Dorsolateral prefrontal cortex (tissue), 120 donors: ENCODE measurements at regions of chr16 and their contacts with region 1.

Region 1: GRCh38 chr16:25340973-25341372 is 83.3 kb upstream of the ZKSCAN2 start:
- DNase-seq: no peak
- H3K4me3 ChIP-seq: no peak overlapping the region
- H3K27ac ChIP-seq: no peak overlapping the region
- H3K27me3 ChIP-seq: no peaks in the 10 kb centered on the region
- CTCF ChIP-seq: no peak

Region 2: GRCh38 chr16:25299792-25300590 is 41.0 kb before region 1 on chr16:
- intact Hi-C with region 1: loop called in 1 of 2 experiments (anchors 5 kb)
- DNase-seq: no peak
- H3K4me3 ChIP-seq: no peak overlapping the region
- H3K27ac ChIP-seq: no peak overlapping the region
- H3K27me3 ChIP-seq: no peaks in the 10 kb centered on the region
- CTCF ChIP-seq: no peak

Region 3: GRCh38 chr16:26295625-26296304 is 954.8 kb after region 1 on chr16:
- intact Hi-C with region 1: no loop called
- DNase-seq: no peak
- H3K4me3 ChIP-seq: no peak overlapping the region
- H3K27ac ChIP-seq: no peak overlapping the region
- H3K27me3 ChIP-seq: peaks cover 0 to 12% (median 0%) of the 10 kb centered on the region in 45 donors
- CTCF ChIP-seq: no peak